Left ventricle myocardium inferior (tissue), 1 donor: ENCODE measurements at regions of chr12 and their contacts with region 1.

Region 1: GRCh38 chr12:13211859-13212664 is 15.5 kb downstream of the EMP1 start:
- DNase-seq: no peak
- H3K4me3 ChIP-seq: no peak overlapping the region
- H3K27ac ChIP-seq: no peak overlapping the region
- H3K4me1 ChIP-seq: peaks cover 50% of the 10 kb centered on the region
- H3K27me3 ChIP-seq: no peaks in the 10 kb centered on the region
- CTCF ChIP-seq: peak; percentile 85

Region 2: GRCh38 chr12:12916135-12916944 is 295.7 kb before region 1 on chr12:
- intact Hi-C with region 1: loop called (anchors 10 kb)
- DNase-seq: peak; percentile 84
- H3K4me3 ChIP-seq: peak overlapping the region; percentile 37
- H3K27ac ChIP-seq: peak overlapping the region; percentile 59
- H3K4me1 ChIP-seq: peaks cover 14% of the 10 kb centered on the region
- H3K27me3 ChIP-seq: peaks cover 21% of the 10 kb centered on the region
- CTCF ChIP-seq: peak; percentile 99

Region 3: GRCh38 chr12:12999959-13000615 is 212.0 kb before region 1 on chr12 and contains the start of gene HEBP1:
- intact Hi-C with region 1: loop called (anchors 5 kb)
- DNase-seq: peak; percentile 97
- H3K4me3 ChIP-seq: peak within 1 kb of the TSS; percentile 86
- H3K27ac ChIP-seq: peak within 1 kb of the TSS; percentile 92
- H3K4me1 ChIP-seq: peaks cover 57% of the 10 kb centered on the region
- H3K27me3 ChIP-seq: no peaks in the 10 kb centered on the region
- CTCF ChIP-seq: no peak
- total RNA-seq, gene HEBP1: 65.4 TPM

Region 4: DNA sequence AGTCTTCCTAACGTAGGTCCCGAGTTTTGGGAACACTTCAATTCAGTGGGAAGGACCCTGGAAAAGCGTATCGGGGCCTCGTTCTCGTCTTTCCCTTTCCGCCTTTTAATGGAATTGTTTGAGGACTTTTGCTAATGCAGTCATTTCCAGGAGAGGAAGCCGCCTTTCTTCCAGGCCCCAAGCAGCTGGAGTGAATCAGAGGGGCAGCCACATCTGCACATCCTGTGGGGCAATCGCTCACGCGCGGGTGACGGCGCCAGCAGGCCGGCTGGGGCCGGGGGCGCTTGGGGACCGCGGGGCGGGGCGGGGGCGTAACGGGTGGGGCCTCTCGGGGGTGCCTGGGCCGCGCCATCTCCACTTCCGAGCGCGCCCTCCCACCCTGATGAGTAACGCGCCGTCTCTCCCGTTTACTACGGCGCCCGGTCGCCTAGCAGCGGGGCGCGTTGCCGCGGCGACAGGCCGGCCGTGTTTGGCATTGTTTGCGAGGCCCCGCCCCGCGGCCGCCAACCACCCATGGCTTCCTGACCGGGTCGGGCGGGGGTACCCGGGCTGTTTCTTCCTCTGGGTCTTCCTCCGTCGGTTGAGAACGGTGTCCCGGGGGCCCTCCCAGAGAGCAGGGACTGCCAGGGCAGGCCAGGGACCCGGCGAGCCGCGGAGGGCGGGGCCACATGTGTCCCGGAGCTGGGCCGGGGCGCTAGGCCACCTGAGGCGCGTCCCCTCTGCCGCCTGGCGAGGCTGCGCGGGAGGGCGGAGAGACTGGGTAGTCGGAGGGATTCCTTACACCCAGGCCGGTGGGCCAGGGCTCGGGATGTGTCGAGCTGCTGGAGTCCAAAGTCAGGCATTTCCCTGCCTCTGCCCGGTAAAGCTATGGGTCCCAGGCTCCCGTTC is 110.9 kb before region 1 on chr12:
- intact Hi-C with region 1: loop called (anchors 5 kb)
- DNase-seq: peak; percentile 91
- H3K4me3 ChIP-seq: peak overlapping the region; percentile 70
- H3K27ac ChIP-seq: peak overlapping the region; percentile 93
- H3K4me1 ChIP-seq: peaks cover 54% of the 10 kb centered on the region
- H3K27me3 ChIP-seq: no peaks in the 10 kb centered on the region
- CTCF ChIP-seq: peak; percentile 19